ENCODE measurements at regions of chr2 and their contacts with region 1.

Region 1: GRCh38 chr2:219206442-219207253 is at the start of gene ZFAND2B:
- H3K4me3 ChIP-seq: peak within 1 kb of the TSS; percentile 76
- H3K27ac ChIP-seq: peak within 1 kb of the TSS; percentile 61
- H3K4me1 ChIP-seq: peaks cover 8% of the 10 kb centered on the region
- CTCF ChIP-seq: peak; percentile 49; the same call in 1 of the 2 replicates

Region 2: DNA sequence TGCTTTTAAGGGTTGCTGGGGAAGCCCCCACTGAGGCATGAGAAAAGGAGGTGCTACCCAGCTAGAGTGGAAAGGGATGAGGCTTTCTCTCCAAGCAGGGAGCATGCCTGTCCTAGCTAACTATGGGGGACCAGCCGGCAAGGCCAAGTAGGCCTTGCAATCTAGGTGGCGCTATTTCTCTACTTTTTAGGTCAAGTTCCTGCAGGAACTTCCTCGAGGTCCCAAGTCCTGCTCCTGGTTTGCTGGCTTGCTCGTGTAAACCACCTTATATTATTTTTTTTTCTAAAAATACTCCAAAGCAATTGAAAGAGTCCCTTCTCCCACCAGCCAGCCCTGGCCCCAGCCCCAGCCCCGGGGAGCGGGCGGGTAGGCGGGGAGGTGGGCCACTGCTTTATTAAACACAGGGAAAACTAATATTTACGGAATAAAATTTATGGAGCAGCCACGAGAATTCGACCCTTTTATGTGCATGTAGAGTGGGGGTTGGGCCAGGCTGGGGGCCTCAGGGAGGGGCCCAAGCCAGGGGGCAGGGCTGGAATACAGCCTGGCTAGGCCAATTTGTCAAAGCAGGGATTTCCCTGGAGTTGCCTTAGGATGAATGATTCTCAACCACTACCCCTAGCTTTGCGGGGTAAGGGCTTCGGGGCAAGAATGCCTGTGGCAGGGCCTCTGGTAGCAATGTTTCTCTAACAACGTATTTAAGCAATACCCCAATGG is 133.1 kb before region 1 on chr2:
- CTCF ChIA-PET with region 1: no interaction called
- POLR2A ChIA-PET with region 1: no interaction called
- H3K4me3 ChIP-seq: no peak overlapping the region
- H3K27ac ChIP-seq: no peak overlapping the region
- H3K4me1 ChIP-seq: no peaks in the 10 kb centered on the region
- CTCF ChIP-seq: no peak

Region 3: GRCh38 chr2:219171231-219171651 is 35.4 kb before region 1 on chr2:
- CTCF ChIA-PET with region 1: interaction called, 12 read pairs
- POLR2A ChIA-PET with region 1: interaction called, 27 read pairs
- H3K4me3 ChIP-seq: no peak overlapping the region
- H3K27ac ChIP-seq: no peak overlapping the region
- H3K4me1 ChIP-seq: 0 out of 2 replicates have a peak, but pooled peaks cover 4% of the 10 kb centered on the region
- CTCF ChIP-seq: peak; percentile 28; the same call in 1 of the 2 replicates

Region 4: DNA sequence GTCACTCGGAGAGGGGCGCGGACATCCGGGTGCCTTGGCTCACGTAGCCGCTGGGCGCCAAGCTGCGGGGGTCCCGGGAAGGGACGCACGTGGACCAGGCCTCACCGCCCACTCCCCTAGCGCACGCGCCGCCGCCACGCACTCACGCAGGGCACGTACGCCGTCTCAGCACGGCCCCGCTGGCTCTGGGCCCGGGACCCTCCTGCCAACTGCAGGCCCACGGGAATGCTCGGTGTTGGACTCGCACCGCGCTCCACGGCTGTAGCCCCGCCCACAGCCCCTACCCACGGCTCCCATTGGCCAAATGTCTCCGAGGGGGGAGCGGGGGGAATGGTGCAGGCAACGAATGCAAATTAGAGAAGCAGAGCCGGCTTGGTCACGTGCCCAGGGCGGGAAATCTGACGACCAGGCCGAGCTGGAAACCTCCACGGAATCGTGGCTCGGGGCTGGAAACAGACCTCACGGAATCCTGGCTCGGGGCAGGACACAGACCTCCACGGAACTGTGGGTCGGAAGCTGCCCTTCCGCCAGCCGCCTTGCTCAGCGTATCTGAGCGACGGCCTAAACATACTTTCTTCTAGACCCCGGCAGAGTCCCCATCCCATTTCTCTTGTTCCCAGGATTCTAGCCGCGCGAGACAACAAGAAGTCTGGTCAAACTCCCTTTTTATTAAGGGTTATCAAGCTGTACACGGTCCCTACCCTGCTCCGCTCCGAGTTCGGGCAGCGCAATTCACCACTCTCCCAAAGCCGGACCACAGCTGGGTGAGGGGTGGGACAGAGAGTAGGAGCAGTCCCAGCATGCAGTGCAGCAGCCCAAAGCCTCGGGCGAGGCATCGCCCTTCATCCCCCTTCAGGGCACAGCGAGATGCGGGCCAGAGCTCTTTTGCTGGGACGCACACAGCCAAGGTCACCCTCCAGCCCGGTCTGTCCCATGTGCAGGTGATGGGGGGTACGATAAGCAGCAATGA is 12.4 kb after region 1 on chr2 and contains the start of gene ABCB6:
- CTCF ChIA-PET with region 1: interaction called, 3 read pairs
- POLR2A ChIA-PET with region 1: interaction called, 42 read pairs
- H3K4me3 ChIP-seq: peak within 1 kb of the TSS; percentile 27
- H3K27ac ChIP-seq: peak within 1 kb of the TSS; percentile 80
- H3K4me1 ChIP-seq: no peaks in the 10 kb centered on the region
- CTCF ChIP-seq: no peak

Region 5: DNA sequence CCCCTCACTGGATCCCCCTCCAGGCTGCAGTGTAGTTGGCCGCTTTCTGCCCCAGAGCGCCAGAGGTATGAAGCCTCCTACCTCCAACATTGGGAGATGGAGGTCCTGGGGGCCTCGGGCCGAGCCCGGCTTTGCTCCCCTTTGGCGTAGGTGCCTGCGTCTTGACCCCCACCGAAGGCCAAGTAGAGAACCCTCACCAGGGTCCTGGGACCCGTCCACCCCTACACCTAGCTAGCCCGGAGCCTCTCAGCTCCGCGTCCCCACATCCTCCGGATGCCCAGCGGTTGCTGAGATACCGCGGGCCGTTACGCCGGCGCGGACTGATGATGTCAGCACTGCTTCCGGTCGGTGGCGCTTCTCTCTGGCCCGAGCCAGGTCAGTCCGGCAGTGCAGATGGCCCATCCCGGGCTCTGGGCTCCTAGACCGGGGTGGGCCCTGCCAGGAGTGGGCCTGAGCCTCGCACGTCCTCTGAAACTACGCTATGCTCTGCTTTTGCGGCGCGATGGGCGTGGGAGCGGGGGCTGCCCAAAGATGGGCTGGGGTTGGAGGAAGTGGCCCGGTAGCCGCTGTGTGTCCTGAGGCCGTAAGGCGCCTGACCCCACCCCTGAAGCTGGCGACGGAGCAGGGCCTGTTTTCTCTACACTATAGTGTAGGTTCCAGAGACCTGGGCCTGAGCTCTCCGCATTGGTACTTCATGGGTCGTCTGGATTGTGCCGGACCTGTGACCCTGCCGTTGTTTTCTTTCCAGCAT is 38.7 kb after region 1 on chr2 and contains the starts of genes GLB1L and STK16:
- CTCF ChIA-PET with region 1: interaction called, 4 read pairs
- POLR2A ChIA-PET with region 1: interaction called, 11 read pairs
- H3K4me3 ChIP-seq: peak within 1 kb of the TSS; percentile 94
- H3K27ac ChIP-seq: peak within 1 kb of the TSS; percentile 85
- H3K4me1 ChIP-seq: peaks cover 10% of the 10 kb centered on the region
- CTCF ChIP-seq: peak; percentile 32; the same call in 1 of the 2 replicates

Region 6: GRCh38 chr2:219261024-219261855 is 54.6 kb after region 1 on chr2:
- CTCF ChIA-PET with region 1: no interaction called
- POLR2A ChIA-PET with region 1: no interaction called
- H3K4me3 ChIP-seq: no peak overlapping the region
- H3K27ac ChIP-seq: no peak overlapping the region
- H3K4me1 ChIP-seq: no peaks in the 10 kb centered on the region; the same call in 1 of the 2 replicates
- CTCF ChIP-seq: no peak

Region 7: DNA sequence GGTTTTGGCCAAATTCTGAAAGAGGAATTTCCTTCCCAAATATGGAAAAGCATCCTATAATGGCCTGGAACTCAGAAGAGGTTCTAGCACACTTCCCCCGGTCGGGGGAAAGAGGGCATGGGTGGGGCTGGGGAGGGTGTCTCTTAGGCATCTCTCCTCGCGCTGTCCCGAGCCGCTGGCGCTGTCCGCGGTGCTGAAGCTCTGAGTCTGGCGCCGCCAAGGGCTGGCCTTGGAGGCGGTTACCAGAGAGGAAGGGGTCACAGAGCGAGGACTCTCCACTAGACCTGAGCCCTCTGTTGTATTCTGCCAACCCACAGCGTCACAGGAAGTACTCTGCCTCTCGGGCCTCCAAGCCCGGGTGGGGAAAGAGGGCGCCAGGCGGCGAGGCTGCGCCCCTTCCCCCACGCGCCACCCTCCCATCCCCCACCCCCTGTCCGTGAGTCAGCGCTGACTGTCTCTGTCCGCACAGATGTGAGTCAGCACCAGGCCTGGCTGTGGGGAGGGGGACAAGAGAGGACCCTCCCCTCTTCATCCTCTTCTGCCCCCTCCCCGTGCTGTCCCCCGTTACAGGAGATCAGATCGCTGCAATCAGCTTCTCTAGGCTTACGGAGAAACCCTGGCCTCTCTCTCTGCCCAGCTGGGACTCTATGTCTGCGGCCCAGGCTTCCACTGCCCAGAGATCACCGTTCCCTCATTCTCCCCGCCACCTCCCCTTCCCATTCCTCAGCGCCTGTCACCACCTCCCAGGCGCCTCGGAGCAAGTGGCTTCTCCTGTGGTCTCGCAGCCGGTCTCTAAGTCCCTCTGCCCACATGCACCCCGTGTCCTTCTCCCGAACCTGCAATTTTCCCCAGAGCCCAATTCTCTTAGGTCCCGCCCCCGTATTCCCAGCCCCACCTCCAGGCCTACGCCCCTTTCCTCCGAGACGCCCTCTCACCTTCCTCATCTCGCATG is 101.8 kb after region 1 on chr2:
- CTCF ChIA-PET with region 1: no interaction called
- POLR2A ChIA-PET with region 1: interaction called, 10 read pairs
- H3K4me3 ChIP-seq: peak overlapping the region; percentile 32
- H3K27ac ChIP-seq: no peak overlapping the region
- H3K4me1 ChIP-seq: no peaks in the 10 kb centered on the region
- CTCF ChIP-seq: no peak

Measured in HEK293 (cell line).